ENCODE measurements at regions of chr13 and their contacts with region 1.

Region 1: GRCh38 chr13:113192902-113193301 is 15.6 kb downstream of the PCID2 start:
- DNase-seq: no peak
- ATAC-seq: no peak
- H3K4me3 ChIP-seq: no peak overlapping the region
- H3K27ac ChIP-seq: no peak overlapping the region
- H3K4me1 ChIP-seq: no peaks in the 10 kb centered on the region
- H3K27me3 ChIP-seq: no peaks in the 10 kb centered on the region
- CTCF ChIP-seq: no peak
- POLR2A ChIP-seq: no peak

Region 2: DNA sequence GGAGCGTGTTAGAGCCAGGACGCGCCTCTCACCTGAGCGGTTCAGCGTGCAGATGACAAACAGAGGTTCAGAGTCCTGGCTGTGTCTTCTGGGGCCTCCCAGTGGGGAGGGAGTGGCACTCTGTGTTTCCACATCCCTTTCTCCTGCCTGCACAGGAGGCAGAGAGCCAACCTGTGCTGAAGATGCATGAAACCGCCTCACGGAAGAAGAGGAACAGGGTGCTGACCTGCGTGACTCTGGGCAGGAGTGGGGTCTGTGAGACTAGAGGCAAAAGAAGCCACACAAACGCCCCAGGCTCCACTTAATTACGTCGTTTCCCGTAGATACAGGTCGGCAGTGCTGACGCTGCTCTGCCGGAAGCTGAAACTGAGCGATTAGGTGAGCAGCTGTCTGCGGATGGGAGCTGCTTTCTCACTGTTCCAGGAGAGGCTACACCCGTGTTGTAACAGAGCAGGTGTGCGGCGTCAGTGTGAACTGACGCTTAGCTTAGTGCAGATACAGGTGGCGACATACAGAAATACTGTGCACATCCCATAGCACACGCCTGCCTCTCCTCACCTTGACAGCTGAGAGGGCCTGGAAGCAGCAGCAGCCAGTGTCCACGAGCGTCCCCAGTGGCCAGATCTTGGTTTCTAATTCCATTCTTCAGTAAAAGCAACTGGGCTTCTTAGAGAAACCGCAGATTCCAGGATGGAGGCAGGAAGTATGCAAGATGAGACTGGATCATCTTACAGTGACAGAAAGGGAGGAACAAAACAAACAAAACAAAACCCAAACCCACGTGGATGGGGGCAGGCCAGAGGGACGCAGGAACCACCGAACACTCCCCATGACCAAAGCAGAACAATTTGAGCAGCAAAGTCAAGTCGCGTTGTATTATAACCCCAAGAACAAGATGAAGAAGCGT is 261.6 kb before region 1 on chr13:
- in situ Hi-C with region 1: no loop called
- intact Hi-C with region 1: loop called (anchors 10 kb)
- DNase-seq: no peak
- ATAC-seq: no peak
- H3K4me3 ChIP-seq: no peak overlapping the region
- H3K27ac ChIP-seq: no peak overlapping the region
- H3K4me1 ChIP-seq: no peaks in the 10 kb centered on the region
- H3K27me3 ChIP-seq: peaks cover 0 to 31% (median 19%) of the 10 kb centered on the region in 3 donors
- CTCF ChIP-seq: peak in 2 of 5 experiments; percentile 7 to 49
- POLR2A ChIP-seq: no peak

Region 3: DNA sequence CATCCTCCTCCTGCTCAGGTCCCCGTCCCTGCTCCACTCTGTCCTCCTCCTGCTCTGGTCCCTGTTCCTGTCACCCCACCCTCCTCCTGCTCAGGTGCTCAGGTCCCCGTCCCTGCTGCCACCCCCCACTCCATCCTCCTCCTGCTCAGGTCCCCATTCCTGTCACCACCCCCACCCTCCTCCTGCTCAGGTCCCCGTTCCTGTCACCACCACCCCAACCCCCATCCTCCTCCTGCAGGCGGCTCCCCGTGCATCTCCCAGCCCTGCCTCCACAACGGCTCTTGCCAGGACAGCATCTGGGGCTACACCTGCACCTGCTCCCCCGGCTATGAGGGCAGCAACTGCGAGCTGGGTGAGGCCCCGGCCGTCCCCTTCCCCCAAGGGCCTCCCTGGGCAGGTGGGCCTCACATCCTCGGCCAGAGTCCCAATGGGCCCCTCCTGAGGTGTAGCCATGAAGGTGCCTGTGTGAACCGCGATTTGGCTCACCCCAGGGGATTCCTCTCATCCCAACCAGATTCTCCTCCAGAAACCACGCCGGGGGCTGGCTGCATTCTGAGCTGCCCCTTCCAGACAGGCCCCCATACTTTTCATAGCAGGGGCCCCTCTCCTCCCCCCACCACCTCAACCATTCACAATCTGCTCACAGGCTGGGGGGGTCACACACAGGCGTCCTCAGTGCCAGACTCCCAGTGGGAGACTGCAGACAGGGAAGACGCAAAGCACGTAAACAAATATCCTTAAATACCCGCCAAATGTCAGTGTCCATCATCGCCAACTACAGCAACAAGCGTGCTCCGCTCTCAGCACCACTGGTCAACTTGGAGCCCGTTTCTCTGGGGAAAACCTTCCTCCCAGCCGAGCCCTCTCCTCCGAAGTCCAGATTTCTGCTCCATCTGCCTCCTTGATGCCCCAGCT is 29.9 kb before region 1 on chr13:
- in situ Hi-C with region 1: no loop called
- intact Hi-C with region 1: no loop called
- DNase-seq: no peak
- ATAC-seq: no peak
- H3K4me3 ChIP-seq: no peak overlapping the region
- H3K27ac ChIP-seq: no peak overlapping the region
- H3K4me1 ChIP-seq: no peaks in the 10 kb centered on the region
- H3K27me3 ChIP-seq: peaks cover 11 to 22% (median 12%) of the 10 kb centered on the region in 3 donors
- CTCF ChIP-seq: no peak
- POLR2A ChIP-seq: no peak

Region 4: GRCh38 chr13:113231306-113232207 is 38.7 kb after region 1 on chr13:
- in situ Hi-C with region 1: no loop called
- intact Hi-C with region 1: no loop called
- DNase-seq: no peak
- ATAC-seq: no peak
- H3K4me3 ChIP-seq: no peak overlapping the region
- H3K27ac ChIP-seq: no peak overlapping the region
- H3K4me1 ChIP-seq: no peaks in the 10 kb centered on the region
- H3K27me3 ChIP-seq: no peaks in the 10 kb centered on the region
- CTCF ChIP-seq: no peak
- POLR2A ChIP-seq: no peak

Region 5: GRCh38 chr13:113288880-113289279 is 96.0 kb after region 1 on chr13:
- in situ Hi-C with region 1: no loop called
- intact Hi-C with region 1: no loop called
- DNase-seq: peak in 1 of 2 donors; percentile 51
- ATAC-seq: no peak
- H3K4me3 ChIP-seq: no peak overlapping the region
- H3K27ac ChIP-seq: peak overlapping the region in 1 of 4 donors; percentile 25
- H3K4me1 ChIP-seq: peaks cover 12 to 17% of the 10 kb centered on the region in 2 donors
- H3K27me3 ChIP-seq: no peaks in the 10 kb centered on the region
- CTCF ChIP-seq: no peak
- POLR2A ChIP-seq: peak in 1 of 2 donors; percentile 32